CD8-positive, alpha-beta T cell (primary cell): ENCODE measurements at regions of chr6 and their contacts with region 1.

Region 1: GRCh38 chr6:139219271-139219729 is 72.5 kb downstream of the TXLNB start:
- DNase-seq: peak; percentile 40 to 84 (median 73)
- ATAC-seq: peak; percentile 96
- H3K4me3 ChIP-seq: no peak overlapping the region
- H3K4me3 Mint-ChIP-seq: no peak overlapping the region
- H3K27ac ChIP-seq: no peak overlapping the region
- H3K27ac Mint-ChIP-seq: peak overlapping the region; percentile 82
- H3K4me1 ChIP-seq: peaks cover 11% of the 10 kb centered on the region
- H3K4me1 Mint-ChIP-seq: peaks cover 13% of the 10 kb centered on the region
- H3K27me3 ChIP-seq: no peaks in the 10 kb centered on the region
- H3K27me3 Mint-ChIP-seq: no peaks in the 10 kb centered on the region
- CTCF ChIP-seq: peak; percentile 66

Region 2: GRCh38 chr6:139109558-139109957 is 109.7 kb before region 1 on chr6:
- CTCF ChIA-PET with region 1: interaction called, 14 read pairs
- POLR2A ChIA-PET with region 1: no interaction called
- intact Hi-C with region 1: no loop called
- DNase-seq: peak in 3 of 9 experiments; percentile 39 to 50 (median 42)
- ATAC-seq: no peak
- H3K4me3 ChIP-seq: no peak overlapping the region
- H3K4me3 Mint-ChIP-seq: no peak overlapping the region
- H3K27ac ChIP-seq: no peak overlapping the region
- H3K27ac Mint-ChIP-seq: peak overlapping the region; percentile 64
- H3K4me1 ChIP-seq: peaks cover 52% of the 10 kb centered on the region
- H3K4me1 Mint-ChIP-seq: peaks cover 73% of the 10 kb centered on the region
- H3K27me3 ChIP-seq: no peaks in the 10 kb centered on the region
- H3K27me3 Mint-ChIP-seq: no peaks in the 10 kb centered on the region
- CTCF ChIP-seq: peak; percentile 28

Region 3: DNA sequence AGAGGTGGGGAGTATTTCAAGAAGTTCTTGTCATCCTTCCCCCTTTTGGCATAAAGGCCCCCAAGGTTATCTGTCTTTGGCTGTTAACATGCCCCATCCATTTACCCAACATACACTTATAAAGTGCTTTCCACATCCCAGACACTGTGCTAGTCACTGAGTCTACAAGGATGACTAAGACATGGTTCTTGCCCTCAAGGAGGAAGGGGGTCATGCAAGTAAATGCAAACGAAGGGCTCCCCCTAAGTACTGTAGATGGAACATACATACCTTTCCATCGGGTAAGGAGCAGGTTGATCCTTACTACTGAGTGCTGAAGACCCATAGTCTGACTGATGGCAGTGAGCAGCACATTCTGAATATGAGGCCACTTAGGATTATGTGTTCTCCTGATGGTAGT is 46.1 kb before region 1 on chr6:
- CTCF ChIA-PET with region 1: interaction called, 7 read pairs
- POLR2A ChIA-PET with region 1: no interaction called
- intact Hi-C with region 1: loop called in 1 of 2 experiments (anchors 5 kb)
- DNase-seq: peak in 4 of 9 experiments; percentile 32 to 74 (median 50)
- ATAC-seq: peak; percentile 84
- H3K4me3 ChIP-seq: no peak overlapping the region
- H3K4me3 Mint-ChIP-seq: peak overlapping the region; percentile 40
- H3K27ac ChIP-seq: peak overlapping the region in 1 of 2 experiments; percentile 34
- H3K27ac Mint-ChIP-seq: peak overlapping the region; percentile 80
- H3K4me1 ChIP-seq: peaks cover 92% of the 10 kb centered on the region
- H3K4me1 Mint-ChIP-seq: peaks cover 93% of the 10 kb centered on the region
- H3K27me3 ChIP-seq: no peaks in the 10 kb centered on the region
- H3K27me3 Mint-ChIP-seq: no peaks in the 10 kb centered on the region
- CTCF ChIP-seq: no peak

Region 4: GRCh38 chr6:139250296-139251044 is 31.2 kb after region 1 on chr6:
- CTCF ChIA-PET with region 1: interaction called, 7 read pairs
- POLR2A ChIA-PET with region 1: no interaction called
- intact Hi-C with region 1: loop called in 1 of 2 experiments (anchors 5 kb)
- DNase-seq: peak; percentile 22 to 79 (median 57)
- ATAC-seq: peak; percentile 96
- H3K4me3 ChIP-seq: no peak overlapping the region
- H3K4me3 Mint-ChIP-seq: no peak overlapping the region
- H3K27ac ChIP-seq: peak overlapping the region in 1 of 2 experiments; percentile 44
- H3K27ac Mint-ChIP-seq: no peak overlapping the region
- H3K4me1 ChIP-seq: peaks cover 3% of the 10 kb centered on the region
- H3K4me1 Mint-ChIP-seq: peaks cover 30% of the 10 kb centered on the region
- H3K27me3 ChIP-seq: no peaks in the 10 kb centered on the region
- H3K27me3 Mint-ChIP-seq: no peaks in the 10 kb centered on the region
- CTCF ChIP-seq: peak; percentile 53

Region 5: GRCh38 chr6:139343052-139343750 is 123.9 kb after region 1 on chr6:
- CTCF ChIA-PET with region 1: interaction called, 10 read pairs
- POLR2A ChIA-PET with region 1: no interaction called
- intact Hi-C with region 1: no loop called
- DNase-seq: peak in 1 of 9 experiments; percentile 24
- ATAC-seq: no peak
- H3K4me3 ChIP-seq: no peak overlapping the region
- H3K4me3 Mint-ChIP-seq: peak overlapping the region; percentile 4
- H3K27ac ChIP-seq: no peak overlapping the region
- H3K27ac Mint-ChIP-seq: peak overlapping the region; percentile 49
- H3K4me1 ChIP-seq: peaks cover 22% of the 10 kb centered on the region
- H3K4me1 Mint-ChIP-seq: peaks cover 25% of the 10 kb centered on the region
- H3K27me3 ChIP-seq: no peaks in the 10 kb centered on the region
- H3K27me3 Mint-ChIP-seq: no peaks in the 10 kb centered on the region
- CTCF ChIP-seq: no peak

Region 6: GRCh38 chr6:139369568-139370282 is 150.4 kb after region 1 on chr6:
- CTCF ChIA-PET with region 1: interaction called, 131 read pairs
- POLR2A ChIA-PET with region 1: interaction called, 25 read pairs
- intact Hi-C with region 1: loop called (anchors 1 kb)
- DNase-seq: peak in 2 of 9 experiments; percentile 56 to 69
- ATAC-seq: no peak
- H3K4me3 ChIP-seq: no peak overlapping the region
- H3K4me3 Mint-ChIP-seq: peak overlapping the region; percentile 66
- H3K27ac ChIP-seq: peak overlapping the region in 1 of 2 experiments; percentile 86
- H3K27ac Mint-ChIP-seq: peak overlapping the region; percentile 98
- H3K4me1 ChIP-seq: peaks cover 31% of the 10 kb centered on the region
- H3K4me1 Mint-ChIP-seq: peaks cover 49% of the 10 kb centered on the region
- H3K27me3 ChIP-seq: no peaks in the 10 kb centered on the region
- H3K27me3 Mint-ChIP-seq: no peaks in the 10 kb centered on the region
- CTCF ChIP-seq: peak; percentile 88

Region 7: GRCh38 chr6:139881251-139881650 is 662.0 kb after region 1 on chr6:
- CTCF ChIA-PET with region 1: no interaction called
- POLR2A ChIA-PET with region 1: no interaction called
- intact Hi-C with region 1: no loop called
- DNase-seq: no peak
- ATAC-seq: no peak
- H3K4me3 ChIP-seq: no peak overlapping the region
- H3K4me3 Mint-ChIP-seq: no peak overlapping the region
- H3K27ac ChIP-seq: no peak overlapping the region
- H3K27ac Mint-ChIP-seq: no peak overlapping the region
- H3K4me1 ChIP-seq: no peaks in the 10 kb centered on the region
- H3K4me1 Mint-ChIP-seq: no peaks in the 10 kb centered on the region
- H3K27me3 ChIP-seq: no peaks in the 10 kb centered on the region
- H3K27me3 Mint-ChIP-seq: peaks cover 2% of the 10 kb centered on the region
- CTCF ChIP-seq: no peak

Region 8: DNA sequence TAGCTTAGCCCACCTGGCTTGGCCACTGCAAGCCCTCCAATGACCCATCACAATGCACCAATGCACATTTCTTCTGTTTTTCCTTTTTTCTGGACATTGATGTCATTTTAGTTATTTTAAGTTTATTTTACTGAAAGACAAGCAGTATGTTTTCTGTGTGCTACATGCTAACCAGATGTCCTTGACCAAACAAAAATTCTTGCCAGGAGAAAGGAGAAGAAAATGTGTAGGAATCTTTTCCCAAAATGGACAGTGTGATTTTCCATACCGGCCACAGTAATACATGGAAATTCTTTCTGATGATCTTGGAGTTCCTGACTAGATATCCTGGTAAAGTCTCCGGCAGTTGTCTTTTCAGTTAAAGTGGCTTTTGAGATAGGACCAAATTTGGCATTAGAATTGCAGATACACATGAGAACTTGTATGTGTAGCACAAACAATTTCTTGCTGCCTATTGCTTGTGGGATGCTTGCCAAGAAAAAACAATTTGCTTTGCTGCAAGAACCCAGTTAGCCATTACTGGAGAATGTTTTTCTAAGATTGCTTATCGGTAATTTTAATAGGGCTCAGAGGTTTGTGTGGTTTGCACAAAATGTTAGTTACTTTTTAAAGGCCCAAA is 851.7 kb after region 1 on chr6:
- CTCF ChIA-PET with region 1: no interaction called
- POLR2A ChIA-PET with region 1: no interaction called
- intact Hi-C with region 1: no loop called
- DNase-seq: no peak
- ATAC-seq: no peak
- H3K4me3 ChIP-seq: no peak overlapping the region
- H3K4me3 Mint-ChIP-seq: no peak overlapping the region
- H3K27ac ChIP-seq: no peak overlapping the region
- H3K27ac Mint-ChIP-seq: no peak overlapping the region
- H3K4me1 ChIP-seq: no peaks in the 10 kb centered on the region
- H3K4me1 Mint-ChIP-seq: no peaks in the 10 kb centered on the region
- H3K27me3 ChIP-seq: no peaks in the 10 kb centered on the region
- H3K27me3 Mint-ChIP-seq: peaks cover 5% of the 10 kb centered on the region
- CTCF ChIP-seq: no peak